ENCODE measurements at regions of chr5 and their contacts with region 1.

Region 1: GRCh38 chr5:41281215-41281810 is 68.0 kb upstream of the C6 start:
- DNase-seq: no peak
- ATAC-seq: no peak
- H3K4me3 ChIP-seq: no peak overlapping the region
- H3K27ac ChIP-seq: no peak overlapping the region
- H3K4me1 ChIP-seq: peaks cover 0 to 6% (median 0%) of the 10 kb centered on the region in 9 donors
- H3K27me3 ChIP-seq: no peaks in the 10 kb centered on the region
- CTCF ChIP-seq: no peak

Region 2: DNA sequence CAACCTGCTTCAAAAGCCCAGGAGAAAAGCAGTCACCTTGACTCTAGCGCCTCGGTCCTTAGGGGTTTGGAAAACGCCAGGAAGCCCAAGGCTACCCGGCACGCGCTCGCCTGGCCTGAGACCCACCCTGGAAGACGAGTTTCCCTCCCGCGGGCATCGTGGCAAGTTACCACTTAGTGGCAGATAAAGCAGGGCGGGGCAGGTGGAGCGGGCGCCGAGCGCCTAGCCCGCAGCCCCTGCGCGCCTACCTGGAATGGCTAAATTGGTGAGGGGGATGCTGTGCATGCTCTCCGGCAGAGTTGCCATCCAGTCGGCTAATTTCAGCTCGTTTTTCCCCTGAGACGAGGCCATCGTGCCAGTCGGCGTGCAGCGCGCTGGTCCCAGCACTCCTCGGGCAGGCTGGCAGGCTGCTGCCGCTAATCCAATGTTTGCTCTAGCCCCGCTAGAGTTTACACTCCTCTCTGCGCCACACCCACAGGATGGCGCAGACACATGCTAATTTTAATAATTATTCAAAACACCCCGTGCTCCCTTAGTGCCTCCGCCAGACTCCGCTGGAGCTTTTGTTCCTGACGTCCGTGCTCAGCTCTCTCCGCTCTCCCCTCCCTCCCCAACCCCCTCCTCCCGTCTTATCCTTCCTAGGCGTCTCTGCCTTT is 229.0 kb after region 1 on chr5 and contains the start of gene PLCXD3:
- intact Hi-C with region 1: loop called in 1 of 10 experiments (anchors 10 kb)
- DNase-seq: peak; percentile 45
- ATAC-seq: peak; percentile 87 to 96 (median 94)
- H3K4me3 ChIP-seq: peak within 1 kb of the TSS; percentile 62 to 78 (median 72)
- H3K27ac ChIP-seq: peak within 1 kb of the TSS; percentile 62 to 88 (median 80)
- H3K4me1 ChIP-seq: peaks cover 3 to 32% (median 15%) of the 10 kb centered on the region in 9 donors
- H3K27me3 ChIP-seq: peaks cover 0 to 16% (median 0%) of the 10 kb centered on the region in 7 donors
- CTCF ChIP-seq: no peak
- total RNA-seq, gene PLCXD3: 36.2 to 104 (median 55.5) TPM